PC-9 (cell line): ENCODE measurements at regions of chr16 and their contacts with region 1.

Region 1: GRCh38 chr16:88754912-88755744 is 29.9 kb downstream of the PIEZO1 start:
- DNase-seq: peak; percentile 96 to 98
- H3K4me3 ChIP-seq: peak overlapping the region; percentile 19; the same call in 1 of the 2 replicates
- H3K27ac ChIP-seq: peak overlapping the region; percentile 57
- H3K4me1 ChIP-seq: peaks cover 61% of the 10 kb centered on the region
- H3K27me3 ChIP-seq: no peaks in the 10 kb centered on the region
- CTCF ChIP-seq: peak; percentile 80

Region 2: DNA sequence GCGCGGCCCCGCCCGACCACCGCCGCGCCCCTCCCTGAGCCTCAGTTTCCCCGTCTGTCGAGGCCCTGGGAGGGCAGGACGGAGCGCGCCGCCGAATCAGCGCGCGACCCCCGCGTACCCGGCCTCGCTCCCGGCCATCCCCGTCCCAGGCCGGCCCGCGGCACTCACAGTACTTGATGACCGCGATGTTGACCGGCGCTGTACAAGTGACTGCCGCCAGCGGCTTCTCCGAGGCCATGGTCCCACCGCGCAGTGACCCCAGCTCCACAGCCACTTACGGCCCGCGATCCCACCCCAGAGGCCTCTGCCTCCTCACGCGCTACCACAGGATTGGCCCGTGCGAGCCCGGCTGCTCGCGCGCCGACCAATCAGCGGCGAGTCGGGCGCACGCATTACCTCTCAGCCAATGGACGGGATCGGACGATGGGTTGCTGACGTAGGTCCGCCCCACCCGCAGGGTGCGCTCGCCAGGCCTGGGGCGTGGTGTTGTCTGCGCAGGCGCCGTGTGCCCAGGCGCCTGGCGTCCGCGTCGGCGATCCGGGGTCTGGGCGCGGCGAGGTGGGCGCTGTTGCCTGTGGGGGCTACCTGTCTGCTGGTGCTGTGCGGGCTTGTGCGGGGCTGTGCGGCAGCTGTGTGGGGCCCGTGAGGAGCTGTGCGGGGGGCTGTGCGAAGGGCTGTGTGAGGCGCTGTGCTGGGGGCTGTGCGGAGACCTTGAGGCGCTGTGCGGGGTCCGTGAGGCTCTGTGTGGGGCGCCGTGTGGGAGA is 92.1 kb before region 1 on chr16 and contains the start of gene MVD:
- CTCF ChIA-PET with region 1: no interaction called
- POLR2A ChIA-PET with region 1: interaction called, 4 read pairs
- intact Hi-C with region 1: loop called (anchors 5 kb)
- DNase-seq: peak; percentile 92 to 99
- H3K4me3 ChIP-seq: peak within 1 kb of the TSS; percentile 90
- H3K27ac ChIP-seq: peak within 1 kb of the TSS; percentile 13; the same call in 1 of the 2 replicates
- H3K4me1 ChIP-seq: peaks cover 9% of the 10 kb centered on the region
- H3K27me3 ChIP-seq: no peaks in the 10 kb centered on the region
- CTCF ChIP-seq: no peak
- total RNA-seq, gene MVD: 146 and 168 TPM in 2 replicates

Region 3: GRCh38 chr16:88737298-88738150 is 17.6 kb before region 1 on chr16:
- CTCF ChIA-PET with region 1: interaction called, 19 read pairs
- POLR2A ChIA-PET with region 1: interaction called, 5 read pairs
- intact Hi-C with region 1: no loop called
- DNase-seq: peak; percentile 50 to 84
- H3K4me3 ChIP-seq: no peak overlapping the region
- H3K27ac ChIP-seq: no peak overlapping the region
- H3K4me1 ChIP-seq: no peaks in the 10 kb centered on the region
- H3K27me3 ChIP-seq: no peaks in the 10 kb centered on the region
- CTCF ChIP-seq: peak; percentile 96

Region 4: GRCh38 chr16:88743693-88744576 is 11.2 kb before region 1 on chr16:
- CTCF ChIA-PET with region 1: interaction called, 10 read pairs
- POLR2A ChIA-PET with region 1: no interaction called
- intact Hi-C with region 1: no loop called
- DNase-seq: peak in 1 of 2 experiments; percentile 76
- H3K4me3 ChIP-seq: no peak overlapping the region
- H3K27ac ChIP-seq: no peak overlapping the region
- H3K4me1 ChIP-seq: peaks cover 5% of the 10 kb centered on the region; the same call in 1 of the 2 replicates
- H3K27me3 ChIP-seq: no peaks in the 10 kb centered on the region
- CTCF ChIP-seq: peak; percentile 88

Region 5: GRCh38 chr16:88770461-88771293 is 15.5 kb after region 1 on chr16:
- CTCF ChIA-PET with region 1: interaction called, 5 read pairs
- POLR2A ChIA-PET with region 1: interaction called, 4 read pairs
- intact Hi-C with region 1: loop called (anchors 1 kb)
- DNase-seq: peak; percentile 92 to 96
- H3K4me3 ChIP-seq: peak overlapping the region; percentile 48; the same call in 1 of the 2 replicates
- H3K27ac ChIP-seq: peak overlapping the region; percentile 71
- H3K4me1 ChIP-seq: peaks cover 90% of the 10 kb centered on the region
- H3K27me3 ChIP-seq: no peaks in the 10 kb centered on the region
- CTCF ChIP-seq: no peak

Region 6: DNA sequence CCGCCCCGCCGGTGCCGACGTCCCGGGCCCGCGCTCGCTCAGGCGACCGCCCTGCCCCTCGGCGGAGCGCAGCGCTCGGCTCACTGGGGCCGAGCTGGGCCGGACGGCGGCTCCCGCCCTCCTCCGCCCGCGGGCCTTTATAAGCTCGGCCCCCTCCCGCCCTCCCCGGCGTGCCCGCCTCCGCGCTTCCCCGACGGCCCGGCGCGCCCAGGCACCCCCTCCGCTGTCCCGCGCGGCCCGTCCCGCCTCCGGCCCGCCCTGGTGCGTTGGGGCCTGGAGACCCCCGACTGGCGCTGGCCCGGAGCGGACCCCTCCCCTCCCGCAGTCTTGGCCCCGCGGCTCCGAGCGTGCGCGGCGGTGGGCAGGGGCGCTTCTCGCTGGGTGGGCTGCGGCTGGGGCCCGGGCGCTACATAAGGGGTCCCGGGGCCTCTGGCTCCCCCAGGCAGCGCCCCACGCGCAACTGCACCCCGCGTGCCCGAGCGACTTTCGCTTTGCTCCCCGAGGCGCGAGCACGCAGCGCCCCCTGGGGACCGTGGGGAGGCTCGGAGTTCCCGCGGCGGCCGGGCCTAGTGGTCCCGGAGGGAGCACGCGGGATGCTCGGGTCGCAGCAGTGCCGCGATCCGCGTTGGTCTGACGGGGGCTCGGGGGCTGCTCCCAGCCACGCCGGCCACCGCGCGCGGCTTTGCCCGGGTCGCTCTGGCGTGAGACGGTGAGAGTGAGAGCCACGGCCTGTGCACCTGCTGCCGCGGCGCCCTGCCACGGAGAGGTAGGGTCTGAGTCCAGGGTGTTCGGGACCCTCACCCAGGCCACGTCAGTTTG is 30.2 kb after region 1 on chr16 and contains the start of gene PIEZO1:
- CTCF ChIA-PET with region 1: interaction called, 15 read pairs
- POLR2A ChIA-PET with region 1: interaction called, 4 read pairs
- intact Hi-C with region 1: loop called (anchors 1 kb)
- DNase-seq: peak in 1 of 2 experiments; percentile 71
- H3K4me3 ChIP-seq: peak within 1 kb of the TSS; percentile 71
- H3K27ac ChIP-seq: peak within 1 kb of the TSS; percentile 74
- H3K4me1 ChIP-seq: peaks cover 31% of the 10 kb centered on the region
- H3K27me3 ChIP-seq: no peaks in the 10 kb centered on the region
- CTCF ChIP-seq: peak; percentile 87
- total RNA-seq, gene PIEZO1: 391 and 426 TPM in 2 replicates

Region 7: DNA sequence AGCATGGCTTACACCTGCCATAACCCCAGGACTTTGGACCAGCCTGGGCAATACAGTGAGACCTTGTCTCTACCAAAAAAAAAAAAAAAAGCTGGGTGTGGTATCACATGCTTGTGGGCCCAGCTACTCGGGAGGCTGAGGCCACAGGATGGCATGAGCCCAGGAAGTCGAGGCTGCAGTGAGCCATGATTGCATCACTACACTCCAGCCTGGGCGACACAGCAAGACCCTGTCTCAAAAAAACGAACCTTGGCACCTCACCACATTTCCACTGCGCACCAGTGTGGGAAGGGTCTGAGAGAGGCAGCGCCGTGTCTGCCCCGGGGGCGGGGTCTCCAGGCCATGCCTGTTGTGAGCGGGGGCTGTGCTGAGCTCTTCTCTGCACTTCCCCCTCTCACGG is 344.8 kb after region 1 on chr16:
- CTCF ChIA-PET with region 1: no interaction called
- POLR2A ChIA-PET with region 1: no interaction called
- intact Hi-C with region 1: no loop called
- DNase-seq: no peak
- H3K4me3 ChIP-seq: no peak overlapping the region
- H3K27ac ChIP-seq: no peak overlapping the region
- H3K4me1 ChIP-seq: peaks cover 3% of the 10 kb centered on the region; the same call in 1 of the 2 replicates
- H3K27me3 ChIP-seq: no peaks in the 10 kb centered on the region
- CTCF ChIP-seq: no peak

Region 8: DNA sequence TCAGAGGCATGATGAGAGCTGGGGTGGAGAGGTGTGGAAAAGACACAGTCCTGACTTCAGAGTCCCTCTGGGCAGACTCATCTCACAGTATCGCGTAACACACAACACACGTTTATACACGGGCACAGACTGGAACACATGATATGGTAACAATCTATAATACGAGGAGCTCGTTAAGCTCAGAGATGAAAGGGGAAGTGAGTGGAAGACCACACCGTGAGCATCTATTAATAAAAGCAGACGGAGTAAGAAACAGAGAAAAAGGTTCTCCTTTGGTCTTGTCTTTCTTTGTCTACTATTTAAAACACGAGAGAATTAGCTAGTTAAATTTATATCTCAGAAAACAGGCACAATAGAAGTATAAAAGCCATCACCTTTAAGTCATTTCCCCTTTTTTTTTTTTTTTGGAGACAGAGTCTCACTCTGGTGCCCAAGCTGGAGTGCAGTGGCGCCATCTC is 721.7 kb after region 1 on chr16:
- CTCF ChIA-PET with region 1: no interaction called
- POLR2A ChIA-PET with region 1: interaction called, 35 read pairs
- intact Hi-C with region 1: no loop called
- DNase-seq: no peak
- H3K4me3 ChIP-seq: 0 out of 2 replicates have a peak overlapping the region, but pooled peaks have one; percentile 8
- H3K27ac ChIP-seq: peak overlapping the region; percentile 55
- H3K4me1 ChIP-seq: peaks cover 97% of the 10 kb centered on the region
- H3K27me3 ChIP-seq: no peaks in the 10 kb centered on the region
- CTCF ChIP-seq: no peak